Mammary epithelial cell (primary cell): ENCODE measurements at regions of chr1 and their contacts with region 1.

Region 1: DNA sequence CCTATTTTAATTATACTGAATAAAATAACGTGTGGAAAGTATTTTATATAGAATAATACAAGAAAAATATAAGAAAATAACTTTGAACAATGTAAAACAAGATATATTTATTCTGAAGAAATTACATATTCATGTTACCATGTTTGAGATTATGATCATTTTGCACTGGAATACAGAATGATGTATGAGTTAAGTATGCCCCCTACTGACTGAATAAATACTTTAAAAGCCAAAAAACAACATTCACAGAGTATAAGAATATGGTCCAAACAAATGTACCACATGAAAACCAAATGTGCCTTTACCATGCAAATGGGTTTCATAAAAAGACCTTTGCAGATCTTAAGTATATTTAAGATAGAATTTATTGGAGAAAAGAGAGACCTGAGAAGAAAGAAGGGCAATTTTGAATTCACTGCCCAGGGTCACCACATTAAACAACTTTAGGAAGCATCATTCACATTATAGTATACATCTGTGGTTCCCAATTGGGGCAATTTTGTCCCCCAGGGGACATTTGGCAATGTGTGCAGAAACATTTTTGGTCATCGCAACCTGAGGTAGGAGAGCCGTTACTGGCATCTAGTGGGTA is 136.6 kb upstream of the GFI1 start:
- DNase-seq: no peak
- H3K4me3 ChIP-seq: no peak overlapping the region
- H3K27ac ChIP-seq: no peak overlapping the region
- H3K4me1 ChIP-seq: no peaks in the 10 kb centered on the region
- H3K27me3 ChIP-seq: no peaks in the 10 kb centered on the region
- CTCF ChIP-seq: peak; percentile 35 to 38

Region 2: DNA sequence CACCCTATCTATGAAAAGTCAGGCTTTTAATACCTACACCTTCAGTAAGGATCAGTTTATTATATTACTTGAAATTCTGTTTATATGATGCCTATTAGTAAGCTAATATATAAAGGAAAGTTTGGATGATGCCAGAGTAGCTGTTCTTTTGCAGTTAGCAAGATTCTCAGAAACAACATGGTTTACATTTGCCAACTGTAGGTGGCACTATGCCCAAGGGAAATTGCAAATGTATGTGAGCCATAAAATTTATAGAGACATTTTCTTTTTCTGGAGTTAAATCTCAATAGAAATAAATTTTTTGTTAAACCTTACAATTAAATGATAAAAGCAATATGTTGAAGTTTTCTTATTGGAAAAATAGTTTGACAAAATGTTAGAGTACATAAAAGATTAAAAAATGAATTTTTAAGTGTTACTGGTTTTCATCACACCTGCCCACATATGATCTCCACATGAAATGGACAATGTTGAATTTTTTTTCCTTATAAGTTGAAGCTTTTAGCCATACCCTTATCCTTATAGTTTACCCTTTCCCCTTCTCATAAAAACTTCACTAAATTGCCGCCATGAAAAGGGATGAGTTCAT is 625.6 kb before region 1 on chr1:
- CTCF ChIA-PET with region 1: no interaction called
- dilution Hi-C with region 1: no loop called
- in situ Hi-C with region 1: loop called (anchors 25 kb)
- intact Hi-C with region 1: no loop called
- DNase-seq: peak; percentile 40
- H3K4me3 ChIP-seq: no peak overlapping the region
- H3K27ac ChIP-seq: no peak overlapping the region
- H3K4me1 ChIP-seq: no peaks in the 10 kb centered on the region
- H3K27me3 ChIP-seq: no peaks in the 10 kb centered on the region
- CTCF ChIP-seq: peak; percentile 51 to 70

Region 3: GRCh38 chr1:92016720-92017316 is 606.5 kb before region 1 on chr1:
- CTCF ChIA-PET with region 1: no interaction called
- dilution Hi-C with region 1: no loop called
- in situ Hi-C with region 1: loop called in 1 of 2 experiments (anchors 25 kb)
- intact Hi-C with region 1: no loop called
- DNase-seq: no peak
- H3K4me3 ChIP-seq: no peak overlapping the region
- H3K27ac ChIP-seq: no peak overlapping the region
- H3K4me1 ChIP-seq: no peaks in the 10 kb centered on the region
- H3K27me3 ChIP-seq: no peaks in the 10 kb centered on the region
- CTCF ChIP-seq: no peak

Region 4: DNA sequence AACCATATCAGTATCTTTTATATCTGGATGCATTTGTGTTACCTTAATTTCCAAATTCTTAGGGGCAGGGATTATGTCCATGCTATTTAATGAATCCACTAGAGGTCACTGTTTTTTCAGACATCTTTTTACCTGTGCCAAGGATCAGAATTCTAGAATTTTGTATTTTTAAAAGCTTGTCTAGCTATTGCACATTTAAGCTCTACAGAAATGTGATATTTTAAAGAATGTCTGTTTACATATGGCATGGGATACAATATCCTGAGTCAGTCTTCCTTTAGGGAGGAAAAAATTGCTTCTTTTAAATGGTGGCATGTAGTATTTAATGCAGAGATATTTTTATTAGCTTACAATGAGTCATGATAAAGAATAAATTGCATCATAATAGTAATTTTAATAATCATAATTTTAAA is 313.1 kb before region 1 on chr1:
- CTCF ChIA-PET with region 1: no interaction called
- dilution Hi-C with region 1: no loop called
- in situ Hi-C with region 1: loop called (anchors 10 to 25 kb)
- intact Hi-C with region 1: loop called (anchors 1 kb)
- DNase-seq: peak; percentile 16
- H3K4me3 ChIP-seq: no peak overlapping the region
- H3K27ac ChIP-seq: no peak overlapping the region
- H3K4me1 ChIP-seq: no peaks in the 10 kb centered on the region
- H3K27me3 ChIP-seq: no peaks in the 10 kb centered on the region
- CTCF ChIP-seq: peak; percentile 50 to 56

Region 5: GRCh38 chr1:92563457-92564216 is 59.6 kb before region 1 on chr1:
- CTCF ChIA-PET with region 1: no interaction called
- dilution Hi-C with region 1: no loop called
- in situ Hi-C with region 1: no loop called
- intact Hi-C with region 1: no loop called
- DNase-seq: no peak
- H3K4me3 ChIP-seq: no peak overlapping the region
- H3K27ac ChIP-seq: no peak overlapping the region
- H3K4me1 ChIP-seq: no peaks in the 10 kb centered on the region
- H3K27me3 ChIP-seq: no peaks in the 10 kb centered on the region
- CTCF ChIP-seq: no peak

Region 6: DNA sequence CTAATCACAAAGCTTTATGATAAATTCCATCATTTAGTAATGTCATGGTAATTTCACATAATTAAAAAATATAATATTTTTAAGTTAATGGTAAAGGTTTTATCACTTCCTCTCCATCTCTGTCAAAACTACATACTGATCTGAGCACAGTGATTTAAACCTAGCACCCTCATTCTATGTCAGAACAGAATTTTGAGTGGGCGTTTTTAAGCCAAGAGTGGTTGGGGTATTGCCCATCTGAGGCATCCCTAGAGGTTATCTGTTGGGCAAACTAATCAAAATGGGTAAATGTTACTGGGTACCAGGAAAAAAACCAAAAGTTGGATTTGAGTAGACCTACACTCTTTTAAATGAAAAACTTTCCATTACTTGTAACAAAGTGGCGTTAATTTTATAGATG is 35.8 kb before region 1 on chr1:
- CTCF ChIA-PET with region 1: no interaction called
- dilution Hi-C with region 1: no loop called
- in situ Hi-C with region 1: no loop called
- intact Hi-C with region 1: no loop called
- DNase-seq: no peak
- H3K4me3 ChIP-seq: no peak overlapping the region
- H3K27ac ChIP-seq: no peak overlapping the region
- H3K4me1 ChIP-seq: peaks cover 24% of the 10 kb centered on the region
- H3K27me3 ChIP-seq: no peaks in the 10 kb centered on the region
- CTCF ChIP-seq: no peak

Region 7: GRCh38 chr1:92638498-92638897 is 15.2 kb after region 1 on chr1:
- CTCF ChIA-PET with region 1: no interaction called
- dilution Hi-C with region 1: no loop called
- in situ Hi-C with region 1: no loop called
- intact Hi-C with region 1: no loop called
- DNase-seq: no peak
- H3K4me3 ChIP-seq: no peak overlapping the region
- H3K27ac ChIP-seq: no peak overlapping the region
- H3K4me1 ChIP-seq: no peaks in the 10 kb centered on the region
- H3K27me3 ChIP-seq: no peaks in the 10 kb centered on the region
- CTCF ChIP-seq: no peak